Adrenal gland (tissue), 19 donors: ENCODE measurements at regions of chr9 and their contacts with region 1.

Region 1: GRCh38 chr9:36560857-36561221 is 11.9 kb upstream of the MELK start:
- DNase-seq: no peak
- H3K4me3 ChIP-seq: no peak overlapping the region
- H3K27ac ChIP-seq: no peak overlapping the region
- H3K4me1 ChIP-seq: no peaks in the 10 kb centered on the region
- H3K27me3 ChIP-seq: no peaks in the 10 kb centered on the region
- CTCF ChIP-seq: no peak
- POLR2A ChIP-seq: no peak

Region 2: DNA sequence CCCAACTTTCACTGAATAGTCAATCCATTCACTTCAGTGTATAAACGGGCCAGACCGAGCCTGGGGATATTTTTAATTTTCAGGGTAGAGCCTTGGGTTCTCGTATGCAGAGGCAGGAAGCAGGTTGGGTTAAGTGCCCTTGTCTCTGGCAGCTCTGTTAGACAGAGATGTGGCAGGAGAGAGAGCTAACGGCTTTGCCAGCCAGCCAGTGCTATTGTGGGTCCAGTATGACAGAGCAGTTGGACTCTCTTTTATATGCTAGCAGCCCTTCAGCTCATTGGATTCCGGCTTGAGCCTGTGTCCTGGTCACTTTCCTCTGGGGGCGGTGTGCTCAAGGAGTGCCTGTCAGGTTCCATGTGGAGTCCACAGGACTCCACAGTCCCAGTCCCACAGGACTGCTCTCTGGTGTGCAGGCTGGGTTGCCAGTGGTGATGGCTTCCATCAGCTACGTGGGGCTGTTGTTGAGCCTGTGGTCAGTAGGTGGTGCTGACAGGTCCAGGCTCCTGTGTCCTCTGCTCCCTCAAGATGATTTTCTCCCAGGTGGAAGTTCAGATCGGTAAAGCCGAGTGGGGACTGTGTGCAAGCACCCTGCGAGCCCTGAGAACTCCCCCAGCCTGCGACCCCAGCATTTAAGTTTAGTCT is 355.8 kb before region 1 on chr9:
- intact Hi-C with region 1: loop called in 1 of 2 experiments (anchors 5 kb)
- DNase-seq: peak in 3 of 7 donors; percentile 34 to 68 (median 41)
- H3K4me3 ChIP-seq: no peak overlapping the region
- H3K27ac ChIP-seq: no peak overlapping the region
- H3K4me1 ChIP-seq: peaks cover 15 to 26% of the 10 kb centered on the region in 2 donors
- H3K27me3 ChIP-seq: no peaks in the 10 kb centered on the region
- CTCF ChIP-seq: peak in 2 of 6 experiments; percentile 9 to 18
- POLR2A ChIP-seq: no peak

Region 3: GRCh38 chr9:36245906-36246305 is 314.9 kb before region 1 on chr9:
- intact Hi-C with region 1: no loop called
- DNase-seq: no peak
- H3K4me3 ChIP-seq: no peak overlapping the region
- H3K27ac ChIP-seq: no peak overlapping the region
- H3K4me1 ChIP-seq: peaks cover 3 to 7% of the 10 kb centered on the region in 2 donors
- H3K27me3 ChIP-seq: no peaks in the 10 kb centered on the region
- CTCF ChIP-seq: no peak
- POLR2A ChIP-seq: no peak

Region 4: GRCh38 chr9:36487482-36488388 is 73.1 kb before region 1 on chr9:
- intact Hi-C with region 1: no loop called
- DNase-seq: peak; percentile 90 to 95 (median 92)
- H3K4me3 ChIP-seq: peak overlapping the region in 2 of 4 donors; percentile 17 to 85
- H3K27ac ChIP-seq: peak overlapping the region; percentile 42 to 96 (median 90)
- H3K4me1 ChIP-seq: peaks cover 11 to 21% of the 10 kb centered on the region in 2 donors
- H3K27me3 ChIP-seq: no peaks in the 10 kb centered on the region
- CTCF ChIP-seq: peak in 4 of 6 experiments; percentile 30 to 48 (median 39)
- POLR2A ChIP-seq: peak; percentile 71 to 86